Gastrocnemius medialis (tissue), 4 donors: ENCODE measurements at regions of chr20 and their contacts with region 1.

Region 1: DNA sequence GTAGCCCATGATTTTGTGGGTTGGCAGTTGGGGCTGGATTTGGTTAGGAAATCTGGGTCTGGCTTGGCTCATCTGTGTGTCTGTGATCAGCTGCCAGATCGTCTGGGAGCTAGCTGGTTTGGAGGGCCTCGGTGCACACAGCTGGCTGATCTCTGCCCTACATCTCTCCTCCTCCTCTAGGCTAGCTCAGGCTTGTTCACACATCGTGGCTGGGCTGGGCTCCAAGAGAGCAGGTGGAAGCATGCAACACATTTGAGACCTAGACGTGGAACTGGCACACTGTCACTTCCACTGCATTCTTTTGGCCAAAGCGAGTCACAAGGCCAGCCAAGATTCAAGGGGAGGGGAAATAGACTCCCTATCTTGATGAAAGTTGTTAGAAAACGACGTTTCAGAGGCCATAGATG is 15.9 kb downstream of the NDUFAF5 start:
- DNase-seq: peak; percentile 91 to 98
- ATAC-seq: peak; percentile 99 to 100
- H3K4me3 ChIP-seq: no peak overlapping the region
- H3K27ac ChIP-seq: peak overlapping the region; percentile 63 to 78 (median 68)
- H3K4me1 ChIP-seq: peaks cover 15 to 22% of the 10 kb centered on the region in 2 donors
- H3K27me3 ChIP-seq: no peaks in the 10 kb centered on the region
- CTCF ChIP-seq: no peak
- POLR2A ChIP-seq: no peak

Region 2: DNA sequence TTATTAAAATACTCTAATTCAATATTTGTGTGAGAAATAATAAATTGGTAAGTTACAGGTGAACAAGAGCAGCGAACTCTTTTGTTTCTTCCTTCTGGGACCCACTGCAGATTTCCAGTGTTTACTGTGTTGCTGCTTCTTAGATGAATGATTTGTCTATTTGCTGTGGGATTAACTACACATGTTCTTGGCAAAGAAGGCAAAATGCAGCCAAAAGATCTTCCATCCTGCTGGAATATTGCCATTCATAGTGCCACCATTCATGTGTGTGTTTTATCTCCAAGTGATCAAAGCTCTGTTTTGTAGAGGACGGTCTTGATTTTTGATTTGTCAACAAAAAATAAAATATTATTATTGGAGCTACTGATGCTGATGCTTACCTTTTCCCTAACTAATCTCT is 1760.0 kb before region 1 on chr20:
- in situ Hi-C with region 1: no loop called
- intact Hi-C with region 1: no loop called
- DNase-seq: no peak
- ATAC-seq: no peak
- H3K4me3 ChIP-seq: no peak overlapping the region
- H3K27ac ChIP-seq: no peak overlapping the region
- H3K4me1 ChIP-seq: no peaks in the 10 kb centered on the region
- H3K27me3 ChIP-seq: no peaks in the 10 kb centered on the region
- CTCF ChIP-seq: no peak
- POLR2A ChIP-seq: no peak

Region 3: GRCh38 chr20:13771853-13772453 is 28.8 kb before region 1 on chr20:
- in situ Hi-C with region 1: no loop called
- intact Hi-C with region 1: no loop called
- DNase-seq: no peak
- ATAC-seq: no peak
- H3K4me3 ChIP-seq: no peak overlapping the region
- H3K27ac ChIP-seq: no peak overlapping the region
- H3K4me1 ChIP-seq: peaks cover 0 to 1% of the 10 kb centered on the region in 2 donors
- H3K27me3 ChIP-seq: no peaks in the 10 kb centered on the region
- CTCF ChIP-seq: peak in 4 of 5 experiments; percentile 13 to 56 (median 31)
- POLR2A ChIP-seq: no peak

Region 4: GRCh38 chr20:13857304-13857703 is 56.6 kb after region 1 on chr20:
- in situ Hi-C with region 1: no loop called
- intact Hi-C with region 1: loop called (anchors 5 kb)
- DNase-seq: peak; percentile 58 to 86
- ATAC-seq: peak; percentile 93 to 97
- H3K4me3 ChIP-seq: no peak overlapping the region
- H3K27ac ChIP-seq: peak overlapping the region in 3 of 4 donors; percentile 8 to 56 (median 51)
- H3K4me1 ChIP-seq: peaks cover 15 to 17% of the 10 kb centered on the region in 2 donors
- H3K27me3 ChIP-seq: no peaks in the 10 kb centered on the region
- CTCF ChIP-seq: no peak
- POLR2A ChIP-seq: no peak

Region 5: DNA sequence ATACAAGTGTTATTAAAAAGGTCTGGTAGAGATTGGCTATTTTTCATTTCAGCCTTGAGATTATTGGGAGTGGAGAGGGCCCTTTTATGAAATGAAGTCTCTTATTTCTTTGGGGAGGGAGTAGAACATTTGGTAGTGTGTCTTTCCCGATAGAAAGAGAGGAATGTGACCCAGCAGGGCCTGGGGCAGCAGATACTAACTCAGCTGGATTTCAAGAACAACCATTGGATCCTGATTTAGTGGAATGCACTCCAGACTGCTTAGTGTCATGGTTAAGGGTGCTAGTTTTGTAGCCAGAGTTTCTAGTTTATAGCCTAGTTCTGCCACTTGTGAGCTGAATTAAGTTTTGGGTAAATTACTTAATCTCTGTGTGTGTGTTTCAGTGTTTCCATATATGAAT is 555.1 kb after region 1 on chr20:
- in situ Hi-C with region 1: no loop called
- intact Hi-C with region 1: no loop called
- DNase-seq: no peak
- ATAC-seq: no peak
- H3K4me3 ChIP-seq: no peak overlapping the region
- H3K27ac ChIP-seq: no peak overlapping the region
- H3K4me1 ChIP-seq: no peaks in the 10 kb centered on the region
- H3K27me3 ChIP-seq: no peaks in the 10 kb centered on the region
- CTCF ChIP-seq: no peak
- POLR2A ChIP-seq: no peak

Region 6: GRCh38 chr20:14820771-14821170 is 1020.0 kb after region 1 on chr20:
- in situ Hi-C with region 1: no loop called
- intact Hi-C with region 1: no loop called
- DNase-seq: no peak
- ATAC-seq: no peak
- H3K4me3 ChIP-seq: no peak overlapping the region
- H3K27ac ChIP-seq: no peak overlapping the region
- H3K4me1 ChIP-seq: no peaks in the 10 kb centered on the region
- H3K27me3 ChIP-seq: no peaks in the 10 kb centered on the region
- CTCF ChIP-seq: no peak
- POLR2A ChIP-seq: no peak